ENCODE measurements at regions of chr20 and their contacts with region 1.

Region 1: DNA sequence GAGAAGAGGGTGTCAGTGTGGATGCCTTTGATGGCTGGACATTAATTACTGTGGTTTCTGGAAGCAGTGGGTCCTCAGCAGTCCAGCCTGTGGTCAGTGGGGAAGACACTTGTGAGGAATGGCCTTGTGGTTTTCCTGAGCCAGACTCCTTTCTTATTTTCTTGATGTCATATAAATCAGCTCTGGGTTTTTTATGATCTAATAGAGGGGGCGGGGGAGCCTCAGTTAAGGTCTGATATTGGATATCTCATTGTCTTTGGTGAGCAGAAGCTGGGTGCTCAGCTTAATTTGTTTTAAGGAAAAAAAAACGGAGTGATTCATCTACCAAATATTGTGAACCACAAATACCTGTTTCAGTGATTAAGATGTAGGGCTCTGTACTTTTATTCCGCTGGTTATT is 62.1 kb downstream of the OTOR start:
- DNase-seq: no peak
- ATAC-seq: no peak
- H3K4me3 ChIP-seq: no peak overlapping the region
- H3K4me3 Mint-ChIP-seq: no peak overlapping the region
- H3K27ac ChIP-seq: no peak overlapping the region
- H3K27ac Mint-ChIP-seq: no peak overlapping the region
- H3K4me1 ChIP-seq: no peaks in the 10 kb centered on the region
- H3K4me1 Mint-ChIP-seq: peaks cover 0 to 1% (median 0%) of the 10 kb centered on the region in 7 donors
- H3K27me3 ChIP-seq: no peaks in the 10 kb centered on the region
- H3K27me3 Mint-ChIP-seq: peaks cover 20 to 42% (median 28%) of the 10 kb centered on the region in 5 donors

Region 2: DNA sequence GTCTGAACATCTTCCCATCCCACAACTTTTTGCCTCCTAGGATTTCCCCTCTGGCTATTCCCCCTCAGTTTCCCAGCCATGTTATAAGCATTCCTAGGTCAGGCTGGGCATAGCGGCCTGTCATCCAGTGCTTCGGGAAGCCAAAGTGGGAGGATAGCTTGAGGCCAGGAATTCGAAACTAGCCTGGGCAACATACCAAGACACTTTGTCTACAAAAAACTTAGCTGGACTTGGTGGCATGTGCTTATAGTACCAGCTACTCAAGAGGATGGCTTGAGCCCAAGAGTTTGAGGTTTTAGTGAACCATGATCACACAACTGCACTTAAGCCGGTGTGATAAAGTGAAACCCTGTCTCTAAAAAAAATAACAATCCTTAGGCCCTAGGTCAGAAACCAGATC is 684.4 kb before region 1 on chr20:
- CTCF ChIA-PET with region 1: no interaction called
- POLR2A ChIA-PET with region 1: no interaction called
- intact Hi-C with region 1: no loop called
- DNase-seq: no peak
- ATAC-seq: no peak
- H3K4me3 ChIP-seq: no peak overlapping the region
- H3K4me3 Mint-ChIP-seq: no peak overlapping the region
- H3K27ac ChIP-seq: no peak overlapping the region
- H3K27ac Mint-ChIP-seq: no peak overlapping the region
- H3K4me1 ChIP-seq: no peaks in the 10 kb centered on the region
- H3K4me1 Mint-ChIP-seq: no peaks in the 10 kb centered on the region
- H3K27me3 ChIP-seq: no peaks in the 10 kb centered on the region
- H3K27me3 Mint-ChIP-seq: peaks cover 0 to 5% (median 0%) of the 10 kb centered on the region in 5 donors

Region 3: GRCh38 chr20:16861708-16862107 is 51.5 kb after region 1 on chr20:
- CTCF ChIA-PET with region 1: no interaction called
- POLR2A ChIA-PET with region 1: no interaction called
- intact Hi-C with region 1: loop called in 1 of 2 experiments (anchors 2 kb)
- DNase-seq: no peak
- ATAC-seq: no peak
- H3K4me3 ChIP-seq: no peak overlapping the region
- H3K4me3 Mint-ChIP-seq: no peak overlapping the region
- H3K27ac ChIP-seq: no peak overlapping the region
- H3K27ac Mint-ChIP-seq: no peak overlapping the region
- H3K4me1 ChIP-seq: no peaks in the 10 kb centered on the region
- H3K4me1 Mint-ChIP-seq: no peaks in the 10 kb centered on the region
- H3K27me3 ChIP-seq: no peaks in the 10 kb centered on the region
- H3K27me3 Mint-ChIP-seq: peaks cover 0 to 30% (median 8%) of the 10 kb centered on the region in 5 donors